ENCODE measurements at regions of chr1 and their contacts with region 1.

Region 1: GRCh38 chr1:89598450-89599331 is 34.2 kb upstream of the LRRC8C start:
- DNase-seq: peak; percentile 26
- ATAC-seq: peak; percentile 96
- H3K4me3 ChIP-seq: no peak overlapping the region
- H3K27ac ChIP-seq: no peak overlapping the region
- H3K4me1 ChIP-seq: no peaks in the 10 kb centered on the region
- H3K27me3 ChIP-seq: no peaks in the 10 kb centered on the region
- CTCF ChIP-seq: peak; percentile 56 to 68 (median 66); a peak in 5 of 6 replicates
- POLR2A ChIP-seq: no peak
- RAD21 ChIP-seq: peak; percentile 71

Region 2: DNA sequence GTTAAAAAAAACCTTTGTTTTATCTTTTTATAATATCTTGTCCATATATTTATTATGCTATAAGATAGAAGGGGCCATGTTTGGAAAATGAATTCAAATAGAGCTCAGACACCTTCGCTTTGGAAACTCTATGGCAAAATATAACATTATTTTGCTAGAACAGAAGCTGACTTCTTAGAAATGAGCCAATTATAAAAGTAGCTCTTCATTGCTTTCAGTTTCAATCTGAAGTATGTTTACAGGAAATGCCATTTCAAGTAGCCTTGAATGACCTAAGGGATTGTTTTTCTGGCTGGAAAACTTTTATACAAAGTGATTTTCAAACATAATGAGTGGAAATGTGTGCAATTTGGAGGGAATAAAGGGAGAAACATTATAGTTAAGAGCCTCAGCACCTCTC is 288.2 kb before region 1 on chr1:
- CTCF ChIA-PET with region 1: no interaction called
- POLR2A ChIA-PET with region 1: no interaction called
- RAD21 ChIA-PET with region 1: no interaction called
- intact Hi-C with region 1: no loop called
- DNase-seq: no peak
- ATAC-seq: no peak
- H3K4me3 ChIP-seq: no peak overlapping the region
- H3K27ac ChIP-seq: no peak overlapping the region
- H3K4me1 ChIP-seq: no peaks in the 10 kb centered on the region
- H3K27me3 ChIP-seq: no peaks in the 10 kb centered on the region
- CTCF ChIP-seq: no peak
- POLR2A ChIP-seq: no peak
- RAD21 ChIP-seq: no peak

Region 3: DNA sequence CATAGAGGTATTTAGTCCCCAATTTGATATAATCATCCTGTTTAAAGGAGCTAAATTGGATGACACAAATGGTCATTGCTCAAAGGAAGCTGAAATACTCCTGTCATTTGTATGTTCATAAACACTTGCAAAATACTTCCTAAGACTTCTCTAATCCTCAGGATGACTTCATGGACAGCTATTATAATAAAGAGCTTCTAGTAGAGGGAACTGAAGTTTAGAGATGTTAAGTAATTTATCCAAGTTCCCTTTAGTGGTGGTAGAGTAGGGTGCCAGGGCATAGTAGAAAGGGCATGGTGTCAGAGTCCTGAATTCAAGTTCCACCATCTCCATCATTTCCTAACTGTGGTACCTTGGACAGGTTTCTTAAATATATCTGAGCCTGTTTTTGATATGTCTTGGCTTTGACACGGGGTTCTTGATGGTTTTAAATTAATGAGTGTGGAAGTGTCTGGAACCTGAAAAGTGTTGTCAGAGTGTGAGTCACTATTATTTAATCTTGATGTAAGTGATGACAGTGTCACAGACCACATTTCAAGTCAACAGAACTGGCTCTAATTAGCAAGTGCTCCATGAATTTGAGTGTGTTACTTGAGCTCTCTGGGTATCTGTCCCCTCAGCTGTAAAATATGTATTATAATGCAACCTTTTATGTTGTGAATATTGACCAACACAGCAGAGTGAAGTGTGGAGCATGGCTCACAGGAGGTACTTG is 246.9 kb before region 1 on chr1:
- CTCF ChIA-PET with region 1: no interaction called
- POLR2A ChIA-PET with region 1: no interaction called
- RAD21 ChIA-PET with region 1: no interaction called
- intact Hi-C with region 1: no loop called
- DNase-seq: no peak
- ATAC-seq: no peak
- H3K4me3 ChIP-seq: no peak overlapping the region
- H3K27ac ChIP-seq: no peak overlapping the region
- H3K4me1 ChIP-seq: no peaks in the 10 kb centered on the region
- H3K27me3 ChIP-seq: no peaks in the 10 kb centered on the region
- CTCF ChIP-seq: no peak
- POLR2A ChIP-seq: no peak
- RAD21 ChIP-seq: no peak

Region 4: DNA sequence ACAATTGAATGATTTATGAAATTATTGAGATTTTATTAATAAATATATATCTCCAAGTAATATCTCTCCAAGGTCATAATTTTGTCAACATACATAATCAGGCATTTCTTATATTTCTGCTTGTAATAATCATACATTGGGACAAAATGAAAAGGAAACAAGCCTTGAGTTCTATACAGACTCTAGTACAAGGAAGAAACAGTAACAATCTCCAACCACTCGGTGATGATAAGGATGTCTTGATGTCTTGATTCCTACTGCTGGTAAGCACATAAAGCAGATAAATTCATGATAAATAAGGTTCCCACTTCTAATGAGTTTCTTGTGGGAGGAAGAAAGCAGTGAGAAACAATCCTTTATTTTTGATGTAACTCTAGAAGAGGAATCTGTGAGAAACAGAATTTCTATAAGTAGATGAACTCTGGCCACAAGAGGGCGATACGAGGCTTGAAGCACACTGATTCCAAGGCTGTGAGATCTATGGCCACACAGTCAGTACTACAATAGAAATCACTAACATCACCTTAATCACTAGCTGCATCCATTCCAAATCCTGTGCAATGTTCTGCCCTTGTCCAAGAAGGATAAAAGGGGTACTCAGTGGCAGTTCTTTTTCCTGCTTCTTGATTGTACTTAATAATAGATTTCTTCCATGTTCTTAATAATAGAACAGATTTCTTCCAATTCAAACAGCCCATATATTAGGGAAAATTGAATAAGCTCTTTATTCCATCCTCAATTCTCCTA is 115.5 kb before region 1 on chr1:
- CTCF ChIA-PET with region 1: interaction called, 5 read pairs
- POLR2A ChIA-PET with region 1: no interaction called
- RAD21 ChIA-PET with region 1: no interaction called
- intact Hi-C with region 1: loop called (anchors 1 kb)
- DNase-seq: peak; percentile 78
- ATAC-seq: peak; percentile 97
- H3K4me3 ChIP-seq: no peak overlapping the region
- H3K27ac ChIP-seq: no peak overlapping the region
- H3K4me1 ChIP-seq: no peaks in the 10 kb centered on the region
- H3K27me3 ChIP-seq: no peaks in the 10 kb centered on the region
- CTCF ChIP-seq: peak; percentile 61 to 83 (median 81)
- POLR2A ChIP-seq: no peak
- RAD21 ChIP-seq: peak; percentile 82

Region 5: DNA sequence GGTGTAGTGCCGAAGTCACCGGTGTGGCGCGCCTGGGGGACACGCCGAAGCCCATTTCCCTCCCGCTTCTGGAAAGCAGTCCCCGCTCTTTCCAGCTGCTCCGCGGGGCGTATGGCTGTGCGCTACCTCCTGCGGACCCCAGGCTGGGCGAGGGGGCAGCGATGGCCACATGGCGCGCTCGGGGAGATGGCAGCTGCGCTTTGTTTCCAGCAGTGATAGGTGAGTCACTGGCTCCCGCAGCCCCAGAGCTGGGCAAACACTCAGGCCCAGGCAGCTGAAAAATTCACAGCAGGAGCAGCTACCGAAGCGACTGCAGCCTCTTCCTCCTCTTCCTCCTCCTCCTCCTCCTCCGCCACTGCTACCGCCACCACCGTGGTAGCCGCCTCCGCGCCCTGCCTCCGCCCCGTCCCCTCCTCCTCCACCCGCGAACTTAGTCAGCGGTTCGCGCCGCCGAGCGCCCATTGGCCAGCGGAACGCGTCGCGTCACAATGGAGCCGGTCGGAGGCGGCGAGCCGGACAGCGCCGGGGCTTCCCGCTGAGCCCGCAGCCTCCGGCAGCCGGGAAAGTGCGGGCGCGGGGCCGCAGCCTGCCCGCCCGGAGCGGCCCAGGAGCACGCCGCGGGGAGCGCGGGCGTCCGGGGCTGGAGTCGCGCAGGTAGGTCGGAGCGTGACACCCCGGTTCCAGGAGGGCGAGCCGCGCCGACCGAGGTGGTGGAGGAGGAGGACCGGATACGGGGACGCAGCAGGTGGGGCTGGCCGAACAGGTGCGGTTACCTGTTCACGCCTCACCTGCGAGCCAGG is 74.1 kb before region 1 on chr1 and contains the start of gene LRRC8B:
- CTCF ChIA-PET with region 1: no interaction called
- POLR2A ChIA-PET with region 1: no interaction called
- RAD21 ChIA-PET with region 1: no interaction called
- intact Hi-C with region 1: loop called (anchors 2 kb)
- DNase-seq: peak; percentile 74
- ATAC-seq: peak; percentile 92
- H3K4me3 ChIP-seq: peak within 1 kb of the TSS; percentile 88 to 94
- H3K27ac ChIP-seq: peak within 1 kb of the TSS; percentile 89
- H3K4me1 ChIP-seq: peaks cover 9 to 19% of the 10 kb centered on the region in 2 experiments; a peak in 3 of 4 replicates
- H3K27me3 ChIP-seq: no peaks in the 10 kb centered on the region
- CTCF ChIP-seq: no peak
- POLR2A ChIP-seq: peak; percentile 58
- RAD21 ChIP-seq: no peak
- total RNA-seq, gene LRRC8B: 17.9 TPM

Region 6: DNA sequence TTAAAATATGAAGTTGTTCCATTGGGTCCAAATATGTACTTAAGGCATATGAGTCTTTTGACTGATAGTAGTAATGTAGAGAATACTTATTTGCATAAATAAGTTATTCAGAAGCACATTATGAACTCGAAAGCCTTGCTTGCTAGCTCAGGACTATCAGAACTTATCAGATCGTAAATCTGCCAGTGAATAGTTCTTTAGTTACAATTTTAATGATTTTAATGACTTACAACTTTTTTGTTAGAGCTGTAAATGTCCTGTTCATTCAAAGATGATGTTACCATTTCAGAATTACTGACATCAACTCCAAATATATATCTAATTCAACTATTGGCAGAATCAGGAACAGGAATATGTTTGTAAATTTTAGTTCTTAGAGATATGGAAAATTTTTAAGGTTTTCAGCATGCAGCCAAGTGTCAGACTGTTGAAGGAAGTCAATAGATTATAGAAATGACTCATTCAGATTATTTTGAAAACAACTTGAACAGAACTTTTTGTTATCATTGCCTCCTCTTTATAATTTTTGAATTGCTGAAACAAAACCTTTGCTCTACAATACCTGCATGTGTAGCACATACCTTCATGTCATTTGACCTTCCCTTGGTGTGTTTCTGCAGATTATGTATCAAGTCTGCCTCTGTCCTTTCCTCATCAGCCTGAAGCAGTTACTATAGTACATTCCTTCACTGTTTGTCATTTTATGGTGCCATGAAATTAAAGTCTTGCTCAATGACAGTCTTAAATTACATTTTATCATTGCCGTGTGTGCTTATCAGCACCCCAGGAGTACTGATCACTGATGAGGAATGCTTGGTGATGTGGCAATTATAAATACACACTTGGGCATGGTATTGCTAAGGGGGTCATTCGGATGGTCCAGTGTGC is 267.1 kb after region 1 on chr1:
- CTCF ChIA-PET with region 1: no interaction called
- POLR2A ChIA-PET with region 1: no interaction called
- RAD21 ChIA-PET with region 1: no interaction called
- intact Hi-C with region 1: no loop called
- DNase-seq: peak; percentile 64
- ATAC-seq: peak; percentile 88
- H3K4me3 ChIP-seq: peak overlapping the region in 1 of 2 experiments; percentile 5; a peak in 1 of 4 replicates
- H3K27ac ChIP-seq: peak overlapping the region; percentile 65; the same call in 1 of the 2 replicates
- H3K4me1 ChIP-seq: peaks cover 21 to 22% of the 10 kb centered on the region in 2 experiments
- H3K27me3 ChIP-seq: no peaks in the 10 kb centered on the region
- CTCF ChIP-seq: no peak
- POLR2A ChIP-seq: no peak
- RAD21 ChIP-seq: no peak

Measured in HCT116 (cell line).